Right ventricle myocardium superior (tissue), 1 donor: ENCODE measurements at regions of chr2 and their contacts with region 1.

Region 1: GRCh38 chr2:85148182-85148581 is 15.0 kb downstream of the TCF7L1 start:
- DNase-seq: no peak
- ATAC-seq: no peak

Region 2: GRCh38 chr2:85230679-85231467 is 82.7 kb after region 1 on chr2:
- intact Hi-C with region 1: loop called (anchors 5 kb)
- DNase-seq: no peak
- ATAC-seq: peak; percentile 70